IMR-90 (cell line): ENCODE measurements at regions of chr17 and their contacts with region 1.

Region 1: GRCh38 chr17:33750943-33751701 is 458.0 kb upstream of the ASIC2 start:
- DNase-seq: peak; percentile 42
- ATAC-seq: peak; percentile 93
- H3K4me3 ChIP-seq: no peak overlapping the region
- H3K27ac ChIP-seq: no peak overlapping the region
- H3K4me1 ChIP-seq: no peaks in the 10 kb centered on the region
- H3K27me3 ChIP-seq: no peaks in the 10 kb centered on the region
- CTCF ChIP-seq: peak; percentile 90
- POLR2A ChIP-seq: no peak
- RAD21 ChIP-seq: peak; percentile 82

Region 2: GRCh38 chr17:32671896-32672295 is 1079.2 kb before region 1 on chr17:
- CTCF ChIA-PET with region 1: no interaction called
- POLR2A ChIA-PET with region 1: no interaction called
- dilution Hi-C with region 1: no loop called
- in situ Hi-C with region 1: no loop called
- intact Hi-C with region 1: loop called (anchors 1 kb)
- DNase-seq: no peak
- ATAC-seq: no peak
- H3K4me3 ChIP-seq: no peak overlapping the region
- H3K27ac ChIP-seq: no peak overlapping the region
- H3K4me1 ChIP-seq: no peaks in the 10 kb centered on the region
- H3K27me3 ChIP-seq: no peaks in the 10 kb centered on the region; the same call in 1 of the 2 replicates
- CTCF ChIP-seq: no peak
- POLR2A ChIP-seq: no peak
- RAD21 ChIP-seq: no peak

Region 3: GRCh38 chr17:32877164-32877764 is 873.9 kb before region 1 on chr17:
- CTCF ChIA-PET with region 1: no interaction called
- POLR2A ChIA-PET with region 1: no interaction called
- dilution Hi-C with region 1: no loop called
- in situ Hi-C with region 1: no loop called
- intact Hi-C with region 1: loop called (anchors 5 kb)
- DNase-seq: peak; percentile 73
- ATAC-seq: peak; percentile 100
- H3K4me3 ChIP-seq: peak overlapping the region; percentile 60
- H3K27ac ChIP-seq: no peak overlapping the region
- H3K4me1 ChIP-seq: peaks cover 2% of the 10 kb centered on the region
- H3K27me3 ChIP-seq: peaks cover 7% of the 10 kb centered on the region
- CTCF ChIP-seq: peak; percentile 95
- POLR2A ChIP-seq: no peak
- RAD21 ChIP-seq: peak; percentile 52

Region 4: DNA sequence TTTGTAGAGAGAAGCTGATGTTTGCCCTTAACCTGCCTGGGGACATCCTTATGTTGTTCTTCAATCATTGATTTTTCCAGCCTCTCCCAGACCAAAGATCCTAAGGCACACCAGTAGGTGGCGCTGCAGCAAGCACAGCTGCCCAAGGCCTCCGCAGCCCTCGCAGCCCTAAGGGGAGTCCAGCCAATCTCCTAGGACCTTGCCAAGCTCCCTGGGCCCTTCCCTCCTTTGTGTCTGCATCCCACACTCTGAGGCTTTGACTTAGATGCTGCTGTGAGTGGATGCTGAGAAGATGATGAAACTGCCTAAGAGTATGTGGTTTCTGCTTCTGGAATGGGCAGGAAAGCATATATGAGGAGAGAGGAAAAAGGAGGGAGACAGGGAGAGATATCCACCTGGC is 712.4 kb before region 1 on chr17:
- CTCF ChIA-PET with region 1: no interaction called
- POLR2A ChIA-PET with region 1: no interaction called
- dilution Hi-C with region 1: no loop called
- in situ Hi-C with region 1: no loop called
- intact Hi-C with region 1: loop called (anchors 1 kb)
- DNase-seq: peak; percentile 15
- ATAC-seq: peak; percentile 69
- H3K4me3 ChIP-seq: no peak overlapping the region
- H3K27ac ChIP-seq: no peak overlapping the region
- H3K4me1 ChIP-seq: no peaks in the 10 kb centered on the region
- H3K27me3 ChIP-seq: no peaks in the 10 kb centered on the region
- CTCF ChIP-seq: peak; percentile 59
- POLR2A ChIP-seq: no peak
- RAD21 ChIP-seq: peak; percentile 55

Region 5: GRCh38 chr17:33832262-33832661 is 81.1 kb after region 1 on chr17:
- CTCF ChIA-PET with region 1: no interaction called
- POLR2A ChIA-PET with region 1: no interaction called
- dilution Hi-C with region 1: no loop called
- in situ Hi-C with region 1: no loop called
- intact Hi-C with region 1: no loop called
- DNase-seq: no peak
- ATAC-seq: no peak
- H3K4me3 ChIP-seq: no peak overlapping the region
- H3K27ac ChIP-seq: no peak overlapping the region
- H3K4me1 ChIP-seq: no peaks in the 10 kb centered on the region
- H3K27me3 ChIP-seq: no peaks in the 10 kb centered on the region
- CTCF ChIP-seq: no peak
- POLR2A ChIP-seq: no peak
- RAD21 ChIP-seq: no peak